ENCODE measurements at regions of chr6 and their contacts with region 1.

Region 1: DNA sequence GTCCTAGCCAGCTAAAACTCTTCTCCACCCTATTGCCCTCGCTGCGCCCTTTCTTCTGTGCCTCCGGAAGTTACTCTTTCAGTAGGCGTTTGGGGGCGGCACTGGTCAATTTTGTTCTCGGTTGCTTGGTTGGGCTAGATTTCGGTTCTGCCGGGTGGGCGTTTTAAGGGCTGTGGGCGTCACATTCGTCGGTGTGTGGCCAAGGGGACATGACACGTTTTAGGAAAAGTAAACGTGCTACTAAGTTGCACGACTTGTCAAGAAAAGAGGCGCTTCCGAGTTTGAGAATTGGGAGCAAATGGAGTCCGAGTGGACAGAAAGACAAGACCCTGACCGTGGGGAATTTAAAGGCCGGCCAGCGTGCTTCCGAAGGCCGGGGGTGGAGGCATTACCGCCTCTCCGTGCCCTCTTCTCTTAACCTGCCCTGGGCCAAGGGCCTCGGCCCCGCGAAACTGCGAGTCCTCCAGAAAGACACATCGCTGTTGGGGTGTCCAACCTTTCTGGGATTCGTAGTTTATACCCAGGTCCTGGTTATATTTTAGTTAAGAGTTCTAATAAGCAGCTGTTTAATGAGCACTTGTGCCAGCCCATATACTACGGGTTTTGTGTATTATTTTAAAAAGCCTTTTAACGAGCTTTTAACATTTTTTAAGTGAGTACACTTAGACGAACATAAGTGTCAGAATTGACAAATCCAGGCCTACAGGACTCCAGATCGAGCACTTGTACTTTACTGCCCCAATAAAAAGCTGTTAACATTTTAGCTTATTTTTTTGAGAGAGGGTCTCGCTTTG is 661 bp upstream of the BAG6 start:
- DNase-seq: peak; percentile 94 to 99 (median 96)
- ATAC-seq: peak; percentile 83
- H3K4me3 ChIP-seq: peak overlapping the region; percentile 73
- H3K27ac ChIP-seq: peak overlapping the region; percentile 98
- H3K4me1 ChIP-seq: peaks cover 22 to 26% of the 10 kb centered on the region in 2 experiments
- H3K27me3 ChIP-seq: no peaks in the 10 kb centered on the region
- CTCF ChIP-seq: peak; percentile 43 to 72 (median 54)
- EP300 ChIP-seq: no peak; the same call in 1 of the 2 replicates
- POLR2A ChIP-seq: peak; percentile 98
- RAD21 ChIP-seq: peak in 1 of 2 experiments; percentile 52; a peak in 2 of 4 replicates

Region 2: DNA sequence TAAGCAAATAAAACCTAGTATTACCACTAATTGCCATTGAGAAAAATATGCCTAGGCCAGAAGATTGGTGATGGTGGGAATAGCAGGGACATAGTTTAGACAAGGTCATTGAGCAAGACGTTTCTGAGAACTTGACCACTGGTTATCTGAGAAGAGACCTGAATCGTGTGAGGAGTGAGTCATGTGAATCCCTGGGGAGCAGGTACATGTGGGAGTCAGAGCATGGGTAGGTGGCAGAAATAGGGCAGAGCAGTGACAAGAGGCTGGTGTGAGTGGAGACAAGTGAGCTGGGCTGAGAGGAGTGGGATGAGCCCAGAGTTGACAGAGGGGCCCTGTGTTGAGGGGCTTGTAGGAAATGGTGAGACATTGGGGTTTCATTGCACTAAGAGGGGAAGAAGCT is 233.3 kb before region 1 on chr6:
- CTCF ChIA-PET with region 1: no interaction called
- POLR2A ChIA-PET with region 1: no interaction called
- in situ Hi-C with region 1: no loop called
- intact Hi-C with region 1: no loop called
- DNase-seq: peak in 1 of 4 experiments; percentile 28
- ATAC-seq: no peak
- H3K4me3 ChIP-seq: no peak overlapping the region
- H3K27ac ChIP-seq: no peak overlapping the region
- H3K4me1 ChIP-seq: peaks cover 0 to 5% of the 10 kb centered on the region in 2 experiments; a peak in 3 of 5 replicates
- H3K27me3 ChIP-seq: peaks cover 0 to 14% of the 10 kb centered on the region in 2 experiments; a peak in 2 of 5 replicates
- CTCF ChIP-seq: no peak
- EP300 ChIP-seq: no peak
- POLR2A ChIP-seq: no peak
- RAD21 ChIP-seq: no peak

Region 3: GRCh38 chr6:31474871-31475286 is 178.2 kb before region 1 on chr6:
- CTCF ChIA-PET with region 1: no interaction called
- POLR2A ChIA-PET with region 1: no interaction called
- in situ Hi-C with region 1: no loop called
- intact Hi-C with region 1: no loop called
- DNase-seq: peak; percentile 38 to 68 (median 58)
- ATAC-seq: peak; percentile 74
- H3K4me3 ChIP-seq: no peak overlapping the region
- H3K27ac ChIP-seq: no peak overlapping the region
- H3K4me1 ChIP-seq: no peaks in the 10 kb centered on the region; a peak in 1 of 5 replicates
- H3K27me3 ChIP-seq: peaks cover 35 to 66% of the 10 kb centered on the region in 2 experiments; a peak in 4 of 5 replicates
- CTCF ChIP-seq: peak; percentile 45 to 63 (median 57)
- EP300 ChIP-seq: no peak
- POLR2A ChIP-seq: no peak
- RAD21 ChIP-seq: no peak

Region 4: GRCh38 chr6:31541658-31542521 is 111.2 kb before region 1 on chr6 and contains the start of gene DDX39B:
- CTCF ChIA-PET with region 1: no interaction called
- POLR2A ChIA-PET with region 1: interaction called, 14 read pairs
- in situ Hi-C with region 1: no loop called
- intact Hi-C with region 1: loop called (anchors 1 kb)
- DNase-seq: peak; percentile 92 to 99 (median 95)
- ATAC-seq: peak; percentile 86
- H3K4me3 ChIP-seq: peak within 1 kb of the TSS; percentile 76
- H3K27ac ChIP-seq: peak within 1 kb of the TSS; percentile 98
- H3K4me1 ChIP-seq: peaks cover 10 to 24% of the 10 kb centered on the region in 2 experiments; a peak in 4 of 5 replicates
- H3K27me3 ChIP-seq: no peaks in the 10 kb centered on the region
- CTCF ChIP-seq: no peak
- EP300 ChIP-seq: peak; percentile 35; the same call in 1 of the 2 replicates
- POLR2A ChIP-seq: peak; percentile 99
- RAD21 ChIP-seq: no peak
- polyA plus RNA-seq, gene DDX39B: 479 to 565 TPM

Region 5: DNA sequence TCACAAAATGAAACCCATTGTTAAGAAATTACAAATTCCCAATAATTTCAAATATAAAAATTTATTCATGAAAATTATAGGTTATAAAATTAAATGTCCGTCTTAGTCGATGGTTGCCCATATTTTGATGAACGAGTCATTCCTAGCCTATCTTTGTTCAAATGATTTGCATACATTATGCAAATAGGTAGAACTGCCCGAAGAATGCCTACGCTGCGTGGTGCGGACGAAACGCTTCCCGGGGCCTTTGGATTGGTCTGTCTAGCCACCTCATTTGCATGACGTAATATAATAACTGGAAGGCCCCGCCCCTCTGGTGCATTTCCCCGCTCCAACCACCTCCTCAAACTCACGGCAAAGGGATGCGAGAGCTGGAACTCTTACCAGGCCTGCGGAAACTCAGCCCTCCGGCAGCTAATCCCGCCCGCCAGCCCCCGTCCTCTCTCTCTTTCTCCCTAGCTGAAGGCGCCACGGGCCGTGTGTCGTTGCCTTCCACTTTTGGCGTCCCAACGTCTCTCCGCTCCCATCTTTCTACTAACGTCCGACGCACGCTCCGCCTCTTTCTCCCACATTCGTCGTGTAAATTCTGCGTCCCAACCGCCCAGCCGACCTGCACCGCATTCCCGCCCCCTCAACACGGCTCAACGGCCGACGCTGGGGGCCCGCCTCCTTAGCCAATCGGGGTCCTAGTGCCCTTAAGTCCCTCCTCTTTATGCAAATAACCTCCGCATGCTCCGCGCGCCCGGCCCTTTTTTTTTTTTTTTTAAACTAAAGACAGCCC is 33.1 kb before region 1 on chr6:
- CTCF ChIA-PET with region 1: no interaction called
- POLR2A ChIA-PET with region 1: interaction called, 41 read pairs
- in situ Hi-C with region 1: no loop called
- intact Hi-C with region 1: no loop called
- DNase-seq: peak; percentile 93 to 100 (median 97)
- ATAC-seq: peak; percentile 92
- H3K4me3 ChIP-seq: peak overlapping the region; percentile 96
- H3K27ac ChIP-seq: peak overlapping the region; percentile 98
- H3K4me1 ChIP-seq: peaks cover 28 to 37% of the 10 kb centered on the region in 2 experiments
- H3K27me3 ChIP-seq: no peaks in the 10 kb centered on the region
- CTCF ChIP-seq: no peak; a peak in 1 of 6 replicates
- EP300 ChIP-seq: peak; percentile 71
- POLR2A ChIP-seq: peak; percentile 99
- RAD21 ChIP-seq: peak in 1 of 2 experiments; percentile 18; a peak in 1 of 4 replicates

Region 6: DNA sequence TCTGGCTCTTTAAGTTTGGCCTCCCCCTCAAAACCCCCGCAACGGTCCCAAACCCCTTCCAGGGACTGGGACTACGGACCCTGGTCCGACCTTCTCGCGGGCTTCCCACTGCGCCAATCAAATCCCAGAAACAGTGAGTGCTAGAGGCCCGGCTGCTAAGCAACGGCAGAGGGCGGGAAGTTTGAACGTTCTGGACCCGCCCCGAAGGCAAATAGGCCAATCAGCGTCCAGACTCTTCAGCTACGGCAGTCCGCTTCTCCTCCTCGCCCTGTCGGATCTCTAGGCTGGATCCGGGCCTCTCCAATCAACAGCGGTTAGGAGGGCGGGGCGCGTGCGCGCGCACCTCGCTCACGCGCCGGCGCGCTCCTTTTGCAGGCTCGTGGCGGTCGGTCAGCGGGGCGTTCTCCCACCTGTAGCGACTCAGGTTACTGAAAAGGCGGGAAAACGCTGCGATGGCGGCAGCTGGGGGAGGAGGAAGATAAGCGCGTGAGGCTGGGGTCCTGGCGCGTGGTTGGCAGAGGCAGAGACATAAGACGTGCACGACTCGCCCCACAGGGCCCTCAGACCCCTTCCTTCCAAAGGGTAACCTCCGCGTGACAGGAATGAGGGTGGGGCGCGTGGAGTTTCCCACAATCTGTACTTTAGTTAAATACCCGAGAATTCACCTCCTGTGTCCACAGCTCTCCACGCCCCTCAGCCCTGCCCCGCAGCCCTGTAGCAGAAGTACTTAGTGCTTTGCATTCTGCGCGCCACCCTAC is 86.7 kb after region 1 on chr6 and contains the start of gene MSH5:
- CTCF ChIA-PET with region 1: no interaction called
- POLR2A ChIA-PET with region 1: interaction called, 182 read pairs
- in situ Hi-C with region 1: no loop called
- intact Hi-C with region 1: no loop called
- DNase-seq: peak; percentile 100
- ATAC-seq: peak; percentile 84
- H3K4me3 ChIP-seq: peak within 1 kb of the TSS; percentile 64
- H3K27ac ChIP-seq: peak within 1 kb of the TSS; percentile 95
- H3K4me1 ChIP-seq: peaks cover 56 to 61% of the 10 kb centered on the region in 2 experiments
- H3K27me3 ChIP-seq: no peaks in the 10 kb centered on the region
- CTCF ChIP-seq: peak in 1 of 3 experiments; percentile 13; a peak in 1 of 6 replicates
- EP300 ChIP-seq: peak; percentile 71
- POLR2A ChIP-seq: peak; percentile 96
- RAD21 ChIP-seq: peak in 1 of 2 experiments; percentile 28; a peak in 3 of 4 replicates
- polyA plus RNA-seq, gene MSH5: 12.5 to 14.0 TPM

Region 7: DNA sequence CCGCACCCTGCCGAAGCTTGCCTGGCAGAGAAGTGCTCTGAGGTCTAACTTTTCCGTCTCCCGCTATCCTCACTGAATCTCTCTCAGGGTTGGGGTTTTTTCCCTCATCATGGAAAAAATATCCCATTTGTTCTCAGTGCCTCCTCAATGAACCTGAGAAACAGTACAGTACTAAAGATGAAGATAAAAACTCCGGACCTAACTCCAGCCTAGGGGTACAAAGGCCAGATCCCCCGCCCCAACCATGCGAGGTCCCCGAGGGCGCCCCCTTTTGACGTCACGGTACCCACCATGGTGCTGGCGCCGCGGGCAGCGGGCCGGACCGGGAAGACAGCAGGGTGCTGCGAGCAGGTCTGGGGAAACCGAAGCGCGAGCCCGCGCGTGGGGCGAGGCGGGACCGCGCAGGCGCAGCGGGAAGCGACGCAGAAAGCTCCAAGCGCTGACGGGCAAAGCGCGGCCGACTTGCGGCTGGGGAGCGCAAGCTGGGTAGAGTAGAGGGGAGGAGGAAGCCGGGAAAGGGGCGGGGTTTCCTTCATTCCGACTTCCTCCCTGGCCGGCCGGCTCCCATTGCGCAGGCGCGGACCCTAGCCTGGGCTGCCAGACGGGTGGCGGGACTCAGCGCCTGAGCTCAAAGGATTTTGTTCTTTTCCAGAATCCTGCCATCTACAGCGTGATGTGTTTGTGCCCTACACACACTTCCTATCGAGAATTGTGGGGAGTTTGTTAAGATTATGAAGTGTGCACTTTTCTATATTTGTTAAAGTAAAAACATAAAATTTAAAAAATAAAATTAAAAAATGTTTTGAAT is 153.5 kb after region 1 on chr6 and contains the start of gene LSM2:
- CTCF ChIA-PET with region 1: no interaction called
- POLR2A ChIA-PET with region 1: interaction called, 18 read pairs
- in situ Hi-C with region 1: no loop called
- intact Hi-C with region 1: no loop called
- DNase-seq: peak; percentile 100
- ATAC-seq: peak; percentile 98
- H3K4me3 ChIP-seq: peak within 1 kb of the TSS; percentile 66
- H3K27ac ChIP-seq: peak within 1 kb of the TSS; percentile 86
- H3K4me1 ChIP-seq: peaks cover 14 to 30% of the 10 kb centered on the region in 2 experiments
- H3K27me3 ChIP-seq: no peaks in the 10 kb centered on the region
- CTCF ChIP-seq: peak; percentile 20 to 66 (median 36); a peak in 5 of 6 replicates
- EP300 ChIP-seq: peak; percentile 32; the same call in 1 of the 2 replicates
- POLR2A ChIP-seq: peak; percentile 97
- RAD21 ChIP-seq: peak; percentile 28 to 42; a peak in 3 of 4 replicates
- polyA plus RNA-seq, gene LSM2: 405 to 407 TPM

Region 8: GRCh38 chr6:31862344-31863227 is 209.5 kb after region 1 on chr6 and contains the start of gene NEU1:
- CTCF ChIA-PET with region 1: no interaction called
- POLR2A ChIA-PET with region 1: interaction called, 123 read pairs
- in situ Hi-C with region 1: no loop called
- intact Hi-C with region 1: loop called (anchors 1 kb)
- DNase-seq: peak; percentile 100
- ATAC-seq: peak; percentile 98
- H3K4me3 ChIP-seq: peak within 1 kb of the TSS; percentile 62
- H3K27ac ChIP-seq: peak within 1 kb of the TSS; percentile 73
- H3K4me1 ChIP-seq: peaks cover 13 to 43% of the 10 kb centered on the region in 2 experiments; a peak in 4 of 5 replicates
- H3K27me3 ChIP-seq: no peaks in the 10 kb centered on the region
- CTCF ChIP-seq: peak in 1 of 3 experiments; percentile 3; a peak in 1 of 6 replicates
- EP300 ChIP-seq: peak; percentile 38
- POLR2A ChIP-seq: peak; percentile 98
- RAD21 ChIP-seq: peak; percentile 19 to 32; a peak in 1 of 4 replicates
- polyA plus RNA-seq, gene NEU1: 14.8 to 20.6 TPM